ENCODE measurements at regions of chr11 and their contacts with region 1.

Region 1: DNA sequence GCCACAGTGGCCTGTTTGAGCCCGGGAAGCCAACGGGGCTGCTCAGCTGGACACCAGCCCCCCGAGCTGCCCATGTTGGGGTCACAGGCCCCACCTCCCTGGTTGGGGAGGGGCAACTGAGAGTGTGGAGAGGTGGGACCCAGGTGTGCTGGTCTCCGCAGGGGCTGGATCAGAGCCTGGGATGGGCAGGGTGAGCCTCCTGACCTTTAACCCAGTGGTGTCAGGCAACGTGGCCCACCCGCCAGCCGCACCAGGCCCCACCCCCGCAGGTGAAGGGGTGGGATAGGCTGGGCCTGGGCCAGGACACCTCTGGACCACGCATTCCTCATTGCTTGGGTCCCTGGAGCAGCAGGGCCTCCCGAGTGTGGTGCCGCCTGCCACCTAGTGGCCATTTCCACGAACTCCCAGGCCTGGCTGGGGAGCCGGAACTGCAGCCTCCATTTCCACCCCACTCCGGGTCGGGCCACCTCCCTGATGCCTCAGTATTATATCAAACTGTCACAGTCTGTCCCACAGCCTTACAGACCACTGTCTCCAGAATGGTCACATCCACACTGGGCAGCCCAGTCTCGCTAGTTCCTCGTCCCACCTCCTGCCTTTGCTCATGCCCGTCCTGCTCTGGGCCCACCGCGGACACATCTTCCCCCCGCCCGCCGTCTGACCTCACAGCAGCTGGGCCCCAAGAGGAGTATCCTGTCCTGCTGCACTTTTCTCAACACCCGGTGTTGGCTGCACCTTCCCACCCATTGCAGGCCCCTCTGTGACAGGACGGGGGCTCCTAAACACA is 13.3 kb upstream of the PPP6R3 start:
- DNase-seq: peak; percentile 45
- H3K4me3 ChIP-seq: no peak overlapping the region
- H3K27ac ChIP-seq: no peak overlapping the region
- H3K4me1 ChIP-seq: peaks cover 4% of the 10 kb centered on the region
- H3K27me3 ChIP-seq: no peaks in the 10 kb centered on the region
- CTCF ChIP-seq: peak; percentile 89 to 92

Region 2: DNA sequence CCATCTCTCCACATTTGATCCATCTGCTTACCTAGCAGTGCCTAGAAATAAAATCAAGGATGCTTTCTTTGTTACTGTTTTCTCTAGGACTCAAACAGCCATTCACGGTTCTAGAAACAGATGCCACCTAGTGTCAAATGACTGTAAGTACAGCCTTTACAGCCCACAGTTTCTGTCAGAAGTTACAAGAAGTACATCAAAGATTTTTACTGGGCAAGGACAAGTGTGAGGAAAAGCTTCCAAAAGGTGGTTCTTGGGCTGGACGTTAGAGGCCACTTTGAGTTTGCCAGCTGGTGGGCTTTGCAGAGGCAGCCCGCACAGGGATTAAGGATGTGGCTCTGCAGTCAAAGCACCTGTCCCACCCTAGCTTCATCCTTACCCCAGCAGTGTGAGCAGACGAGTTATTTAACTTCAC is 241.0 kb before region 1 on chr11:
- CTCF ChIA-PET with region 1: no interaction called
- dilution Hi-C with region 1: no loop called
- in situ Hi-C with region 1: no loop called
- intact Hi-C with region 1: loop called (anchors 5 kb)
- DNase-seq: peak; percentile 44
- H3K4me3 ChIP-seq: no peak overlapping the region
- H3K27ac ChIP-seq: no peak overlapping the region
- H3K4me1 ChIP-seq: peaks cover 10% of the 10 kb centered on the region
- H3K27me3 ChIP-seq: no peaks in the 10 kb centered on the region
- CTCF ChIP-seq: peak; percentile 76 to 96

Region 3: DNA sequence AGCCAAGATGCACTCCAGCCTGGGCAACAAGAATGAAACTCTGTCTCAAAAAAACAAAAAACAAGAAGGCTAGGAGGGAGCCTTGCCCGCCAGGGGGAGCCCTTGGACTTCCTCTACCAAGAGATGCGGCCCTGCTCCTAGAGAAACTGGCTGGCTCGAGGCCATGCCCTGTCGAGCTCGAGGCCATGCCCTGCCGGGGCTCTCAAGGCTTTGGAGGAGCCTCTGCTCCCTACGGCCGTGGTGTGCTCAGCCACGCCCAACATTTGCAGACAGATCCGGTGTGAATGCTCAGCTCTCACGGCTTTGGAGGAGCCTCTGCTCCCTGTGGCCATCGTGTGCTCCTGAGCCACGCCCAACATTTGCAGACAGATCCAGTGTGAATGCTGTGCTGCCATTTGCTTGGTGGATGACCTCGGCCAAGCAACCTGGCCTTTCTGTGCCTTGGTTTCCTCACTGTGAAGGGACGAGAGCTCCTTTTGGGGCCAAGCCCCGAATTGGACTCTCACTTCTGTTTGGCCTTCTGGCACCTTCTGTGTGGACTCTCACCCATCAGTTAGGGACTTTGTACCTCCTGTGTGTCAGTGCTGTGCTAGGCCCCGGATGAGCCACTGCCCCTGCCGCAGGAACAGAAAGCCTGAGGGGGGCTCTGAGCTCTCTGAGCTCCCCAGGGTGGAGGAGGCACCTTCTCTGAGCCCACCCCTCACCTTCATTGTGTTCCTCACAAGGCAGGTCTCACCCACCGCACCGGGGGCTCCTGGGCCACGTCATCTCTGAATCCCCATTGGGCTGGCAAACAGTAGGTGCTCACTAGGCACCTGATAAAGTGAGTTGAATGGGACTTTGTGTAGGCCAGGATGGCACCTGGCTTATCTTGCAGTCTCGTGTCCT is 189.5 kb before region 1 on chr11:
- CTCF ChIA-PET with region 1: no interaction called
- dilution Hi-C with region 1: no loop called
- in situ Hi-C with region 1: no loop called
- intact Hi-C with region 1: loop called (anchors 1 kb)
- DNase-seq: peak; percentile 75
- H3K4me3 ChIP-seq: no peak overlapping the region
- H3K27ac ChIP-seq: no peak overlapping the region
- H3K4me1 ChIP-seq: peaks cover 4% of the 10 kb centered on the region
- H3K27me3 ChIP-seq: no peaks in the 10 kb centered on the region
- CTCF ChIP-seq: peak; percentile 65 to 83